Activated CD4-positive, alpha-beta T cell treated with anti-CD3 and anti-CD28 coated beads, Interleukin-2, amount 10 ng/mL, durations not matched to agents 24 days and 14 days (primary cell): ENCODE measurements at regions of chr17 and their contacts with region 1.

Region 1: GRCh38 chr17:7589204-7589868 is 558 bp downstream of the SOX15 start:
- DNase-seq: peak; percentile 90
- H3K4me3 Mint-ChIP-seq: no peak overlapping the region
- H3K27ac Mint-ChIP-seq: no peak overlapping the region
- H3K4me1 Mint-ChIP-seq: peaks cover 9% of the 10 kb centered on the region
- H3K27me3 Mint-ChIP-seq: no peaks in the 10 kb centered on the region

Region 2: GRCh38 chr17:7513850-7514419 is 75.4 kb before region 1 on chr17:
- intact Hi-C with region 1: loop called (anchors 1 kb)
- DNase-seq: no peak
- H3K4me3 Mint-ChIP-seq: no peak overlapping the region
- H3K27ac Mint-ChIP-seq: no peak overlapping the region
- H3K4me1 Mint-ChIP-seq: peaks cover 15% of the 10 kb centered on the region
- H3K27me3 Mint-ChIP-seq: no peaks in the 10 kb centered on the region

Region 3: DNA sequence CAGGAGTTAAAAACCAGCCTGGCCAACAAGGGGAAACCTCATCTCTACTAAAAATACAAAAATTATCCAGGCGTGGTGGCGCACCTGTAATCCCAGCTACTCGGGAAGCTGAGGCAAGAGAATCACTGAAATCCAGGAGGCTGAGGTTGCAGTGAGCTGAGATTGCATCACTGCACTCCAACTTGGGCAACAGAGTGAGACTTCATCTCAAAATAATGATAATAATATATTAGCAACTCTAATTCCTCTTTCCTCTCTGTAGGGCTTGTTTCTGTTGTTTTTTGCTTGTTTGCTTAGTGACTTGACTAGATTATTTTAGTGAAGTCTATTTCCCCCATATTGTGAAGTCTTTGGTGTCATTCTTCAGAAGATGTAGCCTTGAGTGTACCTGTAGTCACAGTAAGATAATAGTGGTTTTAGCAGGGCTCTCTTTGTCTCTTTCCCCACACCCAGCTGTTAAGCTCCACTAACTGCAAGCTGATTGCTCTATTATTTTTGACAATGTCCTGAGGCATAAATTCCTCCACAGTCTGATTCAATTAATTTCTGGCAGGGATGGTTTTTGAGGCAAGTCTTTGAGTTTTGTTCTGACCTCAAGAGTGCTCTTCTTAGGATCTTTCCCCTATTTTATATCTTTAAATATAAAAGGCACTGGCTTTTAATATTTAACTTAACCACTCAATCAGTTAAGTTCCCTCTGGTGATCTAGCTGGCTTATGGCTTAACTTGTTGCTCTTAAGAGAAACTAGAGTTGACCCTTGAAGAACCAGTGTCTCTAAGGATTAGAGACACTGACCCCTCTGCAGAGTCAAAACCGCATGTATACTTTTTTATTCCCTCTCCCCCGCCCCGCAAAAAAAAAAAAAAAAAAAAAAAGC is 59.1 kb before region 1 on chr17:
- intact Hi-C with region 1: no loop called
- DNase-seq: no peak
- H3K4me3 Mint-ChIP-seq: no peak overlapping the region
- H3K27ac Mint-ChIP-seq: no peak overlapping the region
- H3K4me1 Mint-ChIP-seq: no peaks in the 10 kb centered on the region
- H3K27me3 Mint-ChIP-seq: peaks cover 3% of the 10 kb centered on the region